ENCODE measurements at regions of chr6 and their contacts with region 1.

Region 1: GRCh38 chr6:2353412-2354137 is 108.2 kb upstream of the GMDS start:
- DNase-seq: peak in 6 of 10 donors; percentile 48 to 89 (median 56)

Region 2: GRCh38 chr6:2061880-2062279 is 291.7 kb before region 1 on chr6:
- intact Hi-C with region 1: no loop called
- DNase-seq: no peak

Region 3: DNA sequence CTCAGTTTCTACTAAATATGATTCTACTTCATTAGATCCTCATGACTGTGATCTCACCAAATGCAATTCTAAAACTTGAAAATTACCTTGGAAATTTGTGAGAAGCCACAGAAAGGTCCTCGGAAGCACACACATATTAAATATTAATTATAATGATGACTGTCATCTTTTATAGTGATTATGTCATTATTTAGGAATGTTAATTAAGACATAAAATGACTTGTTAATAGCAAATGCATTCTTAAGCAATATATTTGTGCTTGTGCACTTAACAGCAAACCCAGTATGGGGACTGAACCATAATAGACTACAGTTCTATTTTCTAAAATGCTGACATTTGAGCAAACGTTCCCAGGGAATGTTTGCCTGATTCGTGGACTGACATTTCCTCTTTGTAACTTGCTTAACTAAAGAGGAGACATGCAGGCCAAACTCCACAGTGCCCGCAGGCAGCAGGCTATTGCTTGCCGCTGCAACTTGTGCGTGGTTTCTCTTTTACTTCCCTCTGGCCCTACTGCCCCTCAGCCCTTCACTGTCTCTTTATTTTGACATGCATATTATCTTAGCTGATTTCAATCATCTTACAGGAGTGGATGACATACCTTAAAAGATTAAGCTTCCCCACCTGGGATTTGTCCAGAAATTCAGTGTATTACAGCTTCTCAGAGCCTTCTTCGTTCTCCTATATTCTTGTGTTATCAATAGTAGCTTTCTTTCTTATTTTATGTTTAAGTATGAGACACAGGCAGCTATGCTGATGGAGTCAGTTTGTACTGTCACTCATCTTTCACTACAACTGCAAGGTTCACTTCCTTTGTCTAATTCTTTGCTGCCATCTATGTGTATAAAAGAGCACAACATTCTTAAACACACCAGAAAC is 249.7 kb before region 1 on chr6:
- intact Hi-C with region 1: loop called (anchors 10 kb)
- DNase-seq: no peak

Region 4: GRCh38 chr6:2414885-2415547 is 61.4 kb after region 1 on chr6:
- intact Hi-C with region 1: no loop called
- DNase-seq: no peak

Region 5: DNA sequence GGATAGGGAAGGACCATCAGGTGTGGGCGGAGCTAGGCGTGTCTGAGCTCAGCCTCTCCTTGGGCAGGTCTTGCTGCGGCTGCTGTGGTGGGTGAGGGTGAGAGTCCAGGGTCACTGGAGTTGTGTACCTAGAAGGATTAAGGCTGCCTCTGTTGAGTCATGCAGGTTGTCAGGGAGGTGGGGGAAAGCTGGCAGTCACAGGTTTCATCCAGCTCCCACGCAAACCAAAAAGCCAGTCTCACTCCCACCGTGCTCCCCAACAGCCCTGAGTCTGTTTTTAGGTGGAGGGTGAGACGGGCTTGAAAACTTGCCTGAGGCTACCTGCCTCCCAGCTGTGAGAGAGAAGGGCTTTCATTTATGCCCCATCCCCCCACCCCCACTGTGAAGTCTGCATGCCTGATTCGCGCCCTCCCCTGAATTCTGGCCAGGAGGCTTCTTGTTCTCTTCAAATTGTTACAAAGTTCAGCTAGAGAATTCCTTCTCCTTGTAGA is 235.6 kb after region 1 on chr6:
- intact Hi-C with region 1: no loop called
- DNase-seq: no peak

Region 6: GRCh38 chr6:2634139-2634964 is 280.8 kb after region 1 on chr6:
- intact Hi-C with region 1: loop called (anchors 10 kb)
- DNase-seq: peak; percentile 64 to 97 (median 82)